Right ventricle myocardium superior (tissue), 1 donor: ENCODE measurements at regions of chrX and their contacts with region 1.

Region 1: GRCh38 chrX:133670383-133670782 is 255.1 kb upstream of the GPC4 start:
- DNase-seq: no peak
- ATAC-seq: no peak

Region 2: DNA sequence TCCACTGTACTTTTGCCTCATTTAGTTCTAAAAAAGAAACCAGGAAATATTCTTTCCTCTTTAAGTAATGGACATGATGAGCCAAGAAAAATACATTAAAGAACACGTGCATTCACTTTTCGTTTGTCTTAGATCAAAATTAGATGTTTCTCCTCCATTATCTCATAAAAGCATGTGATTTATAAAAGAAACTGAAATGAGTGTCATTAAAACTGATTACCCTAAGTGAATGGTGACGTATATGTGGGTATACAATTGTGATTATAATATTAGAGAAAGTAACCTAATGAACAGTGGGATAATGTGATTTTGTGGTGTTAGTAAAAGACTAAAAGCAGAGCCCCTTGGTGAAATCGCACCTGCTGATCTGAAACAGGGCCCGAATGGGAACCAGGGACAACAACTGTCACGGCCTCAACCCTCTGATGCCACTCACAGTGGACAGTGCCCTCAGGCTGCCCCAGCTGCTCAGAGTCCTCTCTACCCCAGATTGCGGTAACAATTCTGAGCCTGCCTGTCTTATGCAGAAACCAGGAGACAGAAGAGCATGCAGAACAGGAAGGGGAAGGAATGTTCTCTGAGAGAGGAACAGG is 686.2 kb before region 1 on chrX:
- intact Hi-C with region 1: loop called (anchors 5 kb)
- DNase-seq: no peak
- ATAC-seq: no peak

Region 3: GRCh38 chrX:133335027-133335426 is 335.4 kb before region 1 on chrX:
- intact Hi-C with region 1: loop called (anchors 10 kb)
- DNase-seq: no peak
- ATAC-seq: no peak